ENCODE measurements at regions of chr13 and their contacts with region 1.

Region 1: DNA sequence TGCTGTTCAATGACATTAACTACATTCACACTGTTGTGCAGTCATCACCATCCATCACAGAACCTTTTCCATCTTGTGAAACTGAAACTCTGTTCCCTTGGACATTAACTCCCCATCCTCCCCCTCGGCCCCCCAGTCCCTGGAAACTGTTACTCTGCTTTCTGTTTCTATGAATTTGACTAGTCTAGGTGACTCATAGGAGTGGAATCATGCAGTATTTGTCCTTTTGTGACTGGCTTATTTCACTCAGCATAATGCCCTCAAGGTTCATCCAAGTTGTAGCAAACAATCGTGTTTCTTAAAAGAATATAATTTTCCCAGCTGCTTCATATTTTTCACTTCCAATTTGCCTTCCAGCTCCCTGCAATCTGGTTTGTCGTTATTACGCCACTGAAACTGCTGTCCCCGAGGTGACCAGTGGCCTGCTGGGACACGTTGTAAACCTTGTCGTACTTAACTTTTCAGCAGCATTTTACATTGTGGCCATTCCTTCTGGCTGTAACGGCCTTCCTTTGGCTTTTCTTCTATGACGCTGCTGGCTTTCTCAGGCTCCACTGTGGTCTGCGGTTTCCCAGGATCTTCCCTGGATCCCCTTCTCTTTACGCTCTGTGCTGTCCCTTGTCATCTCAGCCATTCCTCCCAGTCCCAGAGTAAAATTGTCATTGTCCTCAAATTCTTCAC is 74.0 kb downstream of the DHRS12 start:
- DNase-seq: peak; percentile 65
- H3K4me3 ChIP-seq: no peak overlapping the region
- CTCF ChIP-seq: no peak

Region 2: DNA sequence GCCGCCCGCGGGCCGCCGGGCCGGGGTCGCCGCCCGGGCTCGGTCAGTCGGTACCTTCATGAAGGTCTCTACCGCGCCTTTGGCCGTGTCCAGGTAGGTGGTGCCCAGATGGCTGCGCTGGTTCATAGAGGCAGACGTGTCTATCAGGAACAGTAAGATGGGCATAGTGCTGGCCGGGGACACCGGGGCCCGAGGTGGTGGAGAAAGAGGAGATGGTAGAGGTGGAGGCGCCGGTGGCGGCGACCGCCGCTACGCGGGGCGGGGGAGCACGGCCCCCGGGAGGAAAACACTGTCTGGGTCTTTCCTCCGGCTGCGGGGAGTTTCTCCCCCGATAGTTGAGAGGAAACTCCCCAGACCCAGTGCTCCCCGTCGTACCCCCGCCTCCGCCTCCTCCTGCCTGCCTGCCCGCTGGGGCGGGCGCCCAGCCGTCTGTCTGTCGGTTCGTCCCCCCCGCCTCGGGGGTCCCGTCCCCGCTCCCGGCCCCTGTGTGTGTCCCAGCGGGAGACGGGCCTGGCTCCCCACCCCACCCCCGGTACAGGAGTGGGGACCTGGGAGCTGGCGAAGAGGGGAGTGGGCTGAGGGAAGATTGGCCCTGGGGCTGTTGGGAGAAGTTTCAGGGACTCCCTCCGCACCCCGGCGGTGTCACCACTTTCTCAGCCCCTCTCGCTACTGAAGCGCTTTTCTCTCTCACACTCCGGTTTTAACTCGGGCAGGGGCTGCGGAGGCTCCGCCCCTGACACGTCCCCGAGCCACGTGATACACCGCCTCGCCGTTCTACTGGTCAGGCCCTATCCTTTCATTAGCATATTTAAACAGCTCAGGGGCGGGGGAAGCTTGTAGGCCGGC is 277.4 kb before region 1 on chr13 and contains the start of gene INTS6:
- in situ Hi-C with region 1: loop called (anchors 25 kb)
- DNase-seq: peak; percentile 98
- H3K4me3 ChIP-seq: peak within 1 kb of the TSS; percentile 73
- CTCF ChIP-seq: no peak

Region 3: GRCh38 chr13:51619614-51620013 is 110.4 kb before region 1 on chr13:
- in situ Hi-C with region 1: loop called (anchors 10 kb)
- DNase-seq: peak; percentile 18
- H3K4me3 ChIP-seq: no peak overlapping the region
- CTCF ChIP-seq: no peak

Region 4: DNA sequence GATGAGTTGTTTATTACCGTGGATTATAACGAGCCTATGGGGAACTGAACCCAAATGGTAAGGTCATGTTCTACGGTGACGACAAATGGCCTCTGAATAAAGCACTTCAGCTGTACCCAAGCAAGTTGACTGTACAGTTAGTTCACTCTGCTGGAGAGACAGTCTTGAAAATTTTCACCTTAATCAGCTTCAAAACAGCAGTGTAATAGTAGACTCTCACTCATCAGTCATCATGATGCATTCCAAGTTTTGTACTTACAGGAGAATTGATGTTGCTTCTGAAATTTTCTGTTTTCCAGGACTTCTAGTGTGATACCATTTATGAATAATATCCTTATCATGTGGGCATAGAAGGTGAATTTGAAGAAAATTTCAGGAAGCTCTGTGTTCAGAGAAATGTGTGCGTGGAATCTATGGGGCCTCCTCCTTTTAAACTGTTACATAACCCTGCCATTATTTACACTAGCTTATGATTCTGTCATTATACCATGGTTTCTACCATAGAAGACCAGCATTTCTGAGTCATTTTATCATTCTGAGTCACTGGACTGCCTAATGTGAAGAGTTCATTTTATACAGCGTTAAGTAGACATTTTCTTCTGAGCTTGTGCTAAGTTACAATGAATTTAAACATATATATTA is 48.8 kb before region 1 on chr13:
- in situ Hi-C with region 1: no loop called
- DNase-seq: peak; percentile 53
- H3K4me3 ChIP-seq: no peak overlapping the region
- CTCF ChIP-seq: no peak

Region 5: DNA sequence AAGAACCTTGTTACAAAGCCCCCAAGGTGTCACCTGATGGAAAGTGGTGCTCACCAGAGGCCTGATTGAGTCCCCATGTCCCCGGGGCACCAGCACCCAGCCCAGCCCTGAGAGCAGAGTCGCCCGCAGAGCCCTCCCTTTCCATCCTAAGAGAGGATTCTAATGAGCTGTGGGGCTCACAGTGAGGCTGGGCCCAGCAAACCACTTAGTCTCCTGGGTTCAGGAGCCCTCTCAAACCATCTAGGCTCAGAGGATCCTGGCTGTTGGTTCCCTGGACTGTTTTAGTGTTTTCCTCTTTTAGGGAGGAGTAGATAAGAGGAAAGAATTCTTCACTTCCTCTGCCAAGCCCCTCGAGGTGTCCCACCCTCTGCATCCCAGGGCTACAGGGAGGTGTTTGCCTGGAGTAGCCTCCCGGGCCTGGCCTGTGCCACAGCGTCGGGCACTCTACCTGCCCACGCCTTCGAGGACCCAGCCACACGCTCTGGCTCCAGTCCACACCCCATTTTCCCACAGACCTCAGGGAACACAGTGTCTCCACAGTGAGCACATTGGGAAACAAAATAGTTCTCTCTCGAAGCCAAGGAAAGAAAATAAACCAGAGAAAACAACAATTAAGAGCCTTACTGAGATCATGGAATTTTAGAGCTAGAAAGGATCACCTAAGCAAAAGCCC is 39.6 kb after region 1 on chr13:
- in situ Hi-C with region 1: no loop called
- DNase-seq: no peak
- H3K4me3 ChIP-seq: no peak overlapping the region
- CTCF ChIP-seq: no peak

Measured in astrocyte of the cerebellum (primary cell).